ENCODE measurements at regions of chr11 and their contacts with region 1.

Region 1: GRCh38 chr11:31641477-31642062 is 132.0 kb downstream of the ELP4 start:
- DNase-seq: peak; percentile 36
- ATAC-seq: no peak
- H3K4me3 ChIP-seq: no peak overlapping the region
- H3K27ac ChIP-seq: no peak overlapping the region
- H3K4me1 ChIP-seq: no peaks in the 10 kb centered on the region
- H3K27me3 ChIP-seq: no peaks in the 10 kb centered on the region
- CTCF ChIP-seq: peak; percentile 46
- POLR2A ChIP-seq: no peak
- RAD21 ChIP-seq: peak; percentile 41

Region 2: DNA sequence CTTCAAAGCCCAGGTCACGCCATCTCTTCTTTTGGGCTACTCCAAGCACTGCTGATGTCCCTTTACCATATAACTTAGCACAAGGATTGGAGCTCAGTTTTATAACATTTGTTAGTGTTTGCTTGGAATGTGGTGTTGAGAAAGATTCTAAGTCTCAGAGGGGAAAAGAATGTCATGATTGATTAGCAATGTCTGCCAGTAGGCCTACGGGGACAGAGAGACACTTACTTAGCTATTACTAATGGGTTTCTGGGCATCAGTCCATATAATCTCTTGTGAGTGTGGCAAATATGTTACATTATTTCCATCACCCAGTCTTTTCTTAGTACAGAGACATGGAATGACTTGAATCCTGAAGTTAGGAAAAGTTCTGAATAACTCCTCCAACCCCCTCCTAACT is 1486.1 kb before region 1 on chr11:
- CTCF ChIA-PET with region 1: no interaction called
- POLR2A ChIA-PET with region 1: no interaction called
- dilution Hi-C with region 1: no loop called
- in situ Hi-C with region 1: no loop called
- intact Hi-C with region 1: no loop called
- DNase-seq: no peak
- ATAC-seq: no peak
- H3K4me3 ChIP-seq: no peak overlapping the region
- H3K27ac ChIP-seq: no peak overlapping the region
- H3K4me1 ChIP-seq: no peaks in the 10 kb centered on the region
- H3K27me3 ChIP-seq: no peaks in the 10 kb centered on the region
- CTCF ChIP-seq: no peak
- POLR2A ChIP-seq: no peak
- RAD21 ChIP-seq: no peak

Region 3: GRCh38 chr11:31421820-31422219 is 219.8 kb before region 1 on chr11:
- CTCF ChIA-PET with region 1: no interaction called
- POLR2A ChIA-PET with region 1: no interaction called
- dilution Hi-C with region 1: no loop called
- in situ Hi-C with region 1: no loop called
- intact Hi-C with region 1: no loop called
- DNase-seq: no peak
- ATAC-seq: no peak
- H3K4me3 ChIP-seq: no peak overlapping the region
- H3K27ac ChIP-seq: no peak overlapping the region
- H3K4me1 ChIP-seq: no peaks in the 10 kb centered on the region
- H3K27me3 ChIP-seq: no peaks in the 10 kb centered on the region
- CTCF ChIP-seq: no peak
- POLR2A ChIP-seq: no peak
- RAD21 ChIP-seq: no peak

Region 4: DNA sequence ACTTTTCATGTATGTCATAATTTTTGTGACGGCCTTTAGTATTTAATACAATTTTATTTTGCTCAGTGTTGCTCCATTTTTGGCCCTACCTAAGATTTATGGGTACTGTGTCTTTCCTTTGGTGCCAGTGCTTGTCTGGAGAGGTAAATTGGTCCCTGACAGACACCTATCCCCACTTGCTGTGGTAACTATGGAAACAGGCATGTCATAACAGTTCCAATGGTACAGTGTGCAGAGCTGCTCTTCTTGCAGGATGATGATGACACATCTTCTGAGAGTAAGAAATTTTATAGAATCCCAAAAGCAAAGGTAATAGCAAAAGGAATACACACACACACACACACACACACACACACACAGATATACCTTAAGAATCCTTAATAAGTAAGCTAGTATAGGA is 13.5 kb before region 1 on chr11:
- CTCF ChIA-PET with region 1: interaction called, 14 read pairs
- POLR2A ChIA-PET with region 1: no interaction called
- dilution Hi-C with region 1: no loop called
- in situ Hi-C with region 1: no loop called
- intact Hi-C with region 1: no loop called
- DNase-seq: no peak
- ATAC-seq: no peak
- H3K4me3 ChIP-seq: no peak overlapping the region
- H3K27ac ChIP-seq: no peak overlapping the region
- H3K4me1 ChIP-seq: no peaks in the 10 kb centered on the region
- H3K27me3 ChIP-seq: no peaks in the 10 kb centered on the region
- CTCF ChIP-seq: no peak
- POLR2A ChIP-seq: no peak
- RAD21 ChIP-seq: no peak

Region 5: DNA sequence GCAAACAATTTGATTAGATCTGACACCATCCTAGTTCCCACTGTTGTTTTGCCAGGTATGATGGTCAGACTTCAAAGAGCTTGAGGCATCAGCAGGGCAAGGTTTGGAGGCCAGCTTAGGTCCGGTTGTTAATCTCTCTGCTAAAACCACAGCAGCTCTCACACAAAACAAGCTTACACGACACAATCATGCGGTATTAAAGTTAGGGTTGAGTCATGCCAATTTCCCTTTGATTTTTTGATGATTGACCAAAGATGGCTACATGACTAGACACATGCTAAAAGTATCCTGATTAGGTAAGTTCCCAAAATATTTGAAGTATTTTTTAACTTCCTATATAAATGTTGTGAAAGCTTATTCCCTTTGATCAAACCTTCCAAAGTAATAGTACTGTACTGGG is 13.9 kb after region 1 on chr11:
- CTCF ChIA-PET with region 1: interaction called, 11 read pairs
- POLR2A ChIA-PET with region 1: no interaction called
- dilution Hi-C with region 1: no loop called
- in situ Hi-C with region 1: no loop called
- intact Hi-C with region 1: no loop called
- DNase-seq: peak; percentile 85
- ATAC-seq: peak; percentile 68
- H3K4me3 ChIP-seq: no peak overlapping the region
- H3K27ac ChIP-seq: no peak overlapping the region
- H3K4me1 ChIP-seq: peaks cover 4% of the 10 kb centered on the region; the same call in 1 of the 2 replicates
- H3K27me3 ChIP-seq: no peaks in the 10 kb centered on the region
- CTCF ChIP-seq: no peak
- POLR2A ChIP-seq: no peak
- RAD21 ChIP-seq: no peak

Region 6: GRCh38 chr11:31845331-31845730 is 203.8 kb after region 1 on chr11:
- CTCF ChIA-PET with region 1: no interaction called
- POLR2A ChIA-PET with region 1: no interaction called
- dilution Hi-C with region 1: no loop called
- in situ Hi-C with region 1: no loop called
- intact Hi-C with region 1: no loop called
- DNase-seq: no peak
- ATAC-seq: no peak
- H3K4me3 ChIP-seq: no peak overlapping the region
- H3K27ac ChIP-seq: no peak overlapping the region
- H3K4me1 ChIP-seq: no peaks in the 10 kb centered on the region
- H3K27me3 ChIP-seq: peaks cover 19% of the 10 kb centered on the region
- CTCF ChIP-seq: no peak
- POLR2A ChIP-seq: no peak
- RAD21 ChIP-seq: no peak

Region 7: GRCh38 chr11:31856248-31856647 is 214.7 kb after region 1 on chr11:
- CTCF ChIA-PET with region 1: no interaction called
- POLR2A ChIA-PET with region 1: no interaction called
- dilution Hi-C with region 1: no loop called
- in situ Hi-C with region 1: no loop called
- intact Hi-C with region 1: no loop called
- DNase-seq: no peak
- ATAC-seq: no peak
- H3K4me3 ChIP-seq: no peak overlapping the region
- H3K27ac ChIP-seq: no peak overlapping the region
- H3K4me1 ChIP-seq: no peaks in the 10 kb centered on the region
- H3K27me3 ChIP-seq: peaks cover 1% of the 10 kb centered on the region
- CTCF ChIP-seq: no peak
- POLR2A ChIP-seq: no peak
- RAD21 ChIP-seq: no peak

Measured in IMR-90 (cell line).